ENCODE measurements at regions of chr12 and their contacts with region 1.

Region 1: GRCh38 chr12:109197327-109197726 is 80.9 kb downstream of the ACACB start:
- DNase-seq: peak; percentile 40
- ATAC-seq: peak; percentile 11; the same call in 2 of the 3 replicates
- H3K4me3 ChIP-seq: no peak overlapping the region
- H3K27ac ChIP-seq: peak overlapping the region; percentile 88
- H3K4me1 ChIP-seq: peaks cover 47% of the 10 kb centered on the region
- H3K27me3 ChIP-seq: no peaks in the 10 kb centered on the region
- CTCF ChIP-seq: no peak
- EP300 ChIP-seq: no peak
- POLR2A ChIP-seq: no peak
- RAD21 ChIP-seq: no peak

Region 2: DNA sequence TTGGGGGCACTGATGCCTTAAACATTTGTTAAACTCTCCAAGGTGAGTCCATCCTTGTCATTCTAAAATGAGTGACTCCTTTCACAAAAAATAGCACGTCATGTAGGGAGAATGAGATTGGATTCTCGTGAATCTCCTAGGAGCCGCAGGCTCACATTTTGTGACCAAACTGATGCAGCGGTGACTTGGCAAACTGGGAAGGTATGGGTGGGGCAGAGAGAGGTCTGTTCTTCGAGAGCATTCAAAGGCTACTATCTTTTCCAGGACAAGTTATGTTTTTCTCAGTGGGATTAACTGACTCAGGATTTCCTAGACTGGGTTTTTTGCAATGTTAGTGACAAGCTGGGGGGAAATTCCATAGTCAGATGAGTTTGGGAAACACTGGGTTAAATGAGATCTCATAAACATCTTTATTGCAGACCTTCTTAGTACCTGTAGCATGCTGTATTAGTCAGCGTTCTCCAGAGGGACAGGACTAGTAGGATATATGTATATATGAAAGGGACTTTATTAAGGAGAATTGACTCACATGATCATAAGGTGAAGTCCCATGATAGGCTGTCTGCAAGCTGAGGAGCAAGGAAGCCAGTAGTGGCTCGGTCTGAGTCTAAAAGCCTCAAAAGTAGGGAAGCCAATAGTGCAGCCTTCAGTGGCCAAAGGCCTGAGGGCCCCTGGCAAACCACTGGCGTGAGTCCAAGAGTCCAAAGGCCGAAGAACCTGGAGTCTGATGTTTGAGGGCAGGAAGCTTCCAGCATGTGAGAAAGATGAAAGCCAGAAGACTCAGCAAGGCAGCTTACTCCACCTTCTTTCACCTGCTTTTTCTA is 50.7 kb after region 1 on chr12:
- CTCF ChIA-PET with region 1: no interaction called
- POLR2A ChIA-PET with region 1: interaction called, 15 read pairs
- in situ Hi-C with region 1: no loop called
- intact Hi-C with region 1: loop called (anchors 5 kb)
- DNase-seq: peak; percentile 75
- ATAC-seq: peak; percentile 90
- H3K4me3 ChIP-seq: no peak overlapping the region
- H3K27ac ChIP-seq: peak overlapping the region; percentile 60
- H3K4me1 ChIP-seq: peaks cover 23% of the 10 kb centered on the region
- H3K27me3 ChIP-seq: no peaks in the 10 kb centered on the region
- CTCF ChIP-seq: no peak
- EP300 ChIP-seq: peak in 1 of 2 experiments; percentile 43; a peak in 1 of 4 replicates
- POLR2A ChIP-seq: no peak
- RAD21 ChIP-seq: no peak

Region 3: GRCh38 chr12:109432841-109433304 is 235.5 kb after region 1 on chr12:
- CTCF ChIA-PET with region 1: no interaction called
- POLR2A ChIA-PET with region 1: no interaction called
- in situ Hi-C with region 1: no loop called
- intact Hi-C with region 1: no loop called
- DNase-seq: peak; percentile 69
- ATAC-seq: peak; percentile 92
- H3K4me3 ChIP-seq: peak overlapping the region in 1 of 3 experiments; percentile 52; a peak in 2 of 6 replicates
- H3K27ac ChIP-seq: no peak overlapping the region
- H3K4me1 ChIP-seq: peaks cover 28% of the 10 kb centered on the region
- H3K27me3 ChIP-seq: peaks cover 0 to 4% of the 10 kb centered on the region in 2 experiments; a peak in 1 of 5 replicates
- CTCF ChIP-seq: peak; percentile 92
- EP300 ChIP-seq: no peak
- POLR2A ChIP-seq: no peak
- RAD21 ChIP-seq: peak; percentile 32; the same call in 1 of the 2 replicates